Mammary epithelial cell (primary cell): ENCODE measurements at regions of chr7 and their contacts with region 1.

Region 1: DNA sequence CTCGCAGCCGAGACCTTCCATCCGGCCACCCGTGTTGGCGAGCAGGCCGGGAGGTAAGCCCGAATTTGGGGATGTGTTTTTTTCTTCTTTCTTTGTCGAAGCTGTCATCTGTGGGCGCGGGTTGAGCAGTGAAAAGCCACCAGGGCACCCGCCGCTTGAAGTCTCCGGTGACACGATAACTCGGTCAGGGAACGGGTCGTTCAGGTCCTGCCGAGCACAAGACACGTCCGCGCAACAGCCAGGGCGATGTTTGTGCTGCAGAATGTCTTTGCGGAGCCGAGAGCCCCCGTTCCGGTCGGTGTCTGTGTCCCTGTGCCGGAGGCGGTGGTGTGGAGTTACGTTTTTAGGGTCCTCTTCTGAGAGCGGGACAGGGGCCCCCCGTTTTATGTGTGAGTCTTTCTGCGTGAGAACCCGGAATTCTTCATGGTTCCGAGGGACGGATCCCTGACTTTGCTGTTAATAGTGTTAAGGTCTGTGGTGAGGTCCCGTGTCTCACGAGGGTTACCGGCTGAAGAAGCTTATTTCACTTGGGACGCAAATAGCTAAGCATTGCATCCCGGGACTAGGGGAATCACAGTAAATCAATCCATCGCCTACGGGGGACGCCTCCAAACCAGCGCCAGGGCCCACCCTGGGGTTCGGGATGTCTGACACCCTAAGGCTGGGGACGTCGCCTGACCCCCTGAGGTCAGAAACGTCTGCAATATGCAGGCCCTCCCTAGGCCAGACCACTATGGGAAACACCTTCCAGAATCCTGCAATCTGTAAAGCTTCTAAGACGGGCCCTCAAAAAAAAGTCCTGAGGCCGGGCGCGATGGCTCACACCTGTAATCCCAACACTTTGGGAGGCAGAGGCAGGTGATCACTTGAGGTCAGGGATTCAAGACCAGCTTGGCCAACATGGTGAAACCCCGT is 99.5 kb downstream of the ELFN1 start:
- DNase-seq: no peak
- H3K4me3 ChIP-seq: no peak overlapping the region
- H3K27ac ChIP-seq: no peak overlapping the region
- H3K4me1 ChIP-seq: no peaks in the 10 kb centered on the region
- H3K27me3 ChIP-seq: no peaks in the 10 kb centered on the region
- CTCF ChIP-seq: no peak

Region 2: DNA sequence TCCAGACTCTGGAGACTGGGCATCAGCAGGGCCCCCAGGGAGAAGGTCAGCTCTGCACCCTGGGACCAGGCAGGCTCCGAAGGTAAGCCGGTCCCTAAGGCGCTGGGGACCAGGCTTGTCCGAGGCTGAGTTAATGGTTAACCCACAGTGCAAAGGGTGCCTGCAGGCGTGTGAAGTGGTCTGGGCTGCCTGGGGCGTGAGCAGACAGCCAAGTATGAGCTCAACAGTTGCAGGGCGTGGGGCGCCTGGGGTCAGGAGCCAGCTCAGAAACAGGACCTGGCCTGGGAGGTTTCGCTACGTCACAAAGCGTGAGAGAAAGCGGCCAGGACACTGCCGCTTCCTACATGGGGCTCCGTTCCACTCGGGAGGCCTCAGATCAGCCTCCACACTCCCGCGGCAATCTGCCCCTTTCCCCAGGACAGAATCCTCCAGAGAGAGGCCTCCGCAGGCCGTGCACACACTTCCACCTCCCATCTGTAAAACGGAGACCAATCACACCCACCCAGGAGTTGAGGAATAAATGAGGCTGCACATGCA is 1265.9 kb before region 1 on chr7:
- CTCF ChIA-PET with region 1: no interaction called
- dilution Hi-C with region 1: no loop called
- in situ Hi-C with region 1: no loop called
- intact Hi-C with region 1: no loop called
- DNase-seq: no peak
- H3K4me3 ChIP-seq: no peak overlapping the region
- H3K27ac ChIP-seq: no peak overlapping the region
- H3K4me1 ChIP-seq: no peaks in the 10 kb centered on the region
- H3K27me3 ChIP-seq: no peaks in the 10 kb centered on the region
- CTCF ChIP-seq: no peak

Region 3: DNA sequence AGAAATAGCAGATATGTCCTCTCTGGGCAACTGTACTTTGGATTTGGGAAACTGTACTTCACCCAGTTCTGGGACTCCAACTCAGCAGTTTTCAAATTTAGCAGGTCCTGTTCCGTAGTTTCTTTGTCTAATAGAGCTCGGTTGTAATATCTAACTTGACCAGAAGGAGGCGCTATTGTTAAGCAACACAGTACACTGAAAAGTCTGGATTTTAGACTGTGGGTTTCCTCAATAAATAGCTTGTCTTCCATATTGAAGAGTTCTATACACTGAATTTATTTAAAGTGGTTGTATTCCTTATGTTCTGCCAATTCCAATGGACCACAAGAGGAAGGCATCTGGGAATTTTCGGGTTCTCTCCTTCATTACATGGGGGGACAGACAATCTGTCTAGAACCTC is 59.6 kb before region 1 on chr7:
- CTCF ChIA-PET with region 1: no interaction called
- dilution Hi-C with region 1: loop called (anchors 10 kb)
- in situ Hi-C with region 1: no loop called
- intact Hi-C with region 1: no loop called
- DNase-seq: no peak
- H3K4me3 ChIP-seq: no peak overlapping the region
- H3K27ac ChIP-seq: no peak overlapping the region
- H3K4me1 ChIP-seq: no peaks in the 10 kb centered on the region
- H3K27me3 ChIP-seq: no peaks in the 10 kb centered on the region
- CTCF ChIP-seq: peak; percentile 22 to 42

Region 4: DNA sequence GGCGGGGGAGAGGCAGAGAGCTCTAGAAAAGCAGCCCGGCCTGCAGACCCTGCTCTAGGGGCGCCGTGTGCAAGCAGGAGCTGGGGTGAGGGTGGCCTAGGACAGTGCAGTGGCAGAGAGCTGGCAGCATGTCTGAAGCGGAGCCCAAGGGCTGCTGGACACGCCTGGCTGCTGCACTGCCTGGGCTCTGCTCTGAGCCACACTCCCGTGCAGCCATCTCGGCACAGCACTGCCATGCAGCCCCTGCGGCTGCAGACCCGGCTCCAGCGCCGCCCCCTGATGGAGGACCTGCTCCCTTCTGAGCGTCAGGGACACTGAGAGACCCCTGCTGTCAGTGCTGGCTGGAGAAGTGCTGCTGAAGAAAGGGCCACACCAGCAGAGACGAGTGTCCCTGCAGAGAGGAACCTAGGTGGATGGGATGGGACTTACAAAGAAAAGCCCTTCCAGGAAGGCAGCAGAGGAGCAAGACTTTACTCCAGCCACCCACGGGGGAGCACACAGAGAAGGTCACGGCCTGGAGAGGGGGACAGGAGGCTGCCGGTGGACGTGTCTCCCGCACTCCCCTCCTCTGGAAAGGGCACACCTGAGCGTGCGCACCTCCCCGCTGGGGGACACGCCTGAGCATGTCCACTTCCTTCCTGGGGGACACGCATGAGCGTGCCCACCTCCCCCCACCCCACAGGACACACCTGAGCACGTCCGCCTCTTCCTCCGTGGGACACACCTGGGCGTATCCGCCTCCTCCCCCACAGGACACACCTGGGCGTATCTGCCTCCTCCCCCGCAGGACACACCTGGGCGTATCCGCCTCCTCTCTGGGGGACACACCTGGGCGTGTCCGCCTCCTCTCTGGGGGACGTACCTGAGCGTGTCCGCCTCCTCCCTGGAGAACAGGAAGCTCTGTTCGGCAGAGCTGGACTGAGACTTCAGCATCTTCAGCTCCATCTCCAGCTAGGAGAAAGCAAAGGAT is 210.3 kb after region 1 on chr7:
- CTCF ChIA-PET with region 1: no interaction called
- dilution Hi-C with region 1: loop called (anchors 10 kb)
- in situ Hi-C with region 1: no loop called
- intact Hi-C with region 1: no loop called
- DNase-seq: no peak
- H3K4me3 ChIP-seq: no peak overlapping the region
- H3K27ac ChIP-seq: no peak overlapping the region
- H3K4me1 ChIP-seq: peaks cover 7% of the 10 kb centered on the region
- H3K27me3 ChIP-seq: no peaks in the 10 kb centered on the region
- CTCF ChIP-seq: no peak

Region 5: DNA sequence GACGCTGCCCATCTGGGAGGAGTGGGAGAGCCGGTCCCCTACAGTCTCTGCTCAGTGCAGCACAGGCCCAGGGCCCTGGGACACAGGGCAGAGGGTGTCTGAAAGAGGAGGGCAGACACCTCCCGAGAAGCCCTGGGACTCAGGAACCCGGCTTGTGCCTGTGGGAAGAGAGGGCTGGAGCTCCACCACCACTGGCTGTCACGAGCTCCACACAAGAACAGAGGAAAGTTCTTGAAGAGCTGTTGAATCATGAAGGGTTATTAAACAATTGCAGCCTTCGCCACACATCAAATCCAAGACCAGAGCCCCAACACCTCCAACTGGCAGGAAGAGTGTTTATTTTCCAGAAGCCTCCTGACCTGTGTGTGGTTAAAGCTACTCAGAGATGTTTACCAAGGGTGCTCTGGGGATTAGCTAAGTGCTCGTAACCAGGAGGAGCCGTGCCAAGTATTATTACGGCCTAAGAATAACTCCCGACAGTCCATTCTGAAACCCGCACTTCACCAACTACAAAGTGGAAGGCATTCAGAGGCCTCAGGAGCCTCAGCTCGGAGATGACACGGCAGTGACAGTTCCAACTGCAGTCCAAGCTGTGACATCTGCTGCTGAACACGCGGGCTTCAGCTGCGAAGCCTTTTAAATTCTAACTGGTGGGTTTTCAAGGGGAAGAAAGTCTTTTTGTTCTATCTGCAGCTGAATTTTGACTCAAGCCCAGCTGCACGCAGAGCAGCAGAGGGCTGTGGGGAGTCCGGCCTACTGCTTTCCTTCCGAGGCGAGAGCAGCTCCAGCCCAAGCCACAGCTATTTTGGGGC is 388.1 kb after region 1 on chr7:
- CTCF ChIA-PET with region 1: no interaction called
- dilution Hi-C with region 1: loop called (anchors 10 kb)
- in situ Hi-C with region 1: no loop called
- intact Hi-C with region 1: no loop called
- DNase-seq: no peak
- H3K4me3 ChIP-seq: no peak overlapping the region
- H3K27ac ChIP-seq: no peak overlapping the region
- H3K4me1 ChIP-seq: no peaks in the 10 kb centered on the region
- H3K27me3 ChIP-seq: no peaks in the 10 kb centered on the region
- CTCF ChIP-seq: no peak

Region 6: DNA sequence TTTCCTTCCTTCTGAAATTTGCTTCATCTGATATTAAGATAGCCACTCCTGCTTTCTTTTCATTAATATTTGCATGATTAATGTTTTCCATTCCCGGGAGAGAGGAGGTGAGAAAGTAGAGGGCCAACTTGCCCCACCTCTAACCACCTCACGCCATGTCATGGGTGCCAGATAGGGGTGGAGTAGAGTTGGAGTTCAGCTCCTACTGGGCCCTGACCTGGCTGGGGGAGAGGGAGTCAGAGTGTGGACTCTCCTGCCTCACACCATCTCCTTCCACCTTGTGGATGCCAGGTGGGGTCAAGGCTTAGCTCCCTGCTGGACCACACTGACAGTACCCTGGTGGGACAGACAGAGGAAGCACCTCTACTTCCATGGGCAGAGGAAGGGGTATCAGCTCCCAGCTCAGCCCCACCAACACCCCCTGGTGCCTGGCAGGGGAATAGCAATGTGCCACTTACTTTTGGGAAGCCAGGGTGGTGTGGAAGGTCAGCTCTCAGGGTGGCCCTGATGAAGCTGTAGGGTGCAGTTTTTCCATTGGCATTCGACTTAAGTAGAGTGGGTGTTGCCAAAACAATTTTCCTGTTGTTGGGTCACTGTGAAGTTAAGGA is 661.8 kb after region 1 on chr7:
- CTCF ChIA-PET with region 1: no interaction called
- dilution Hi-C with region 1: loop called (anchors 10 kb)
- in situ Hi-C with region 1: no loop called
- intact Hi-C with region 1: no loop called
- DNase-seq: no peak
- H3K4me3 ChIP-seq: no peak overlapping the region
- H3K27ac ChIP-seq: no peak overlapping the region
- H3K4me1 ChIP-seq: no peaks in the 10 kb centered on the region
- H3K27me3 ChIP-seq: no peaks in the 10 kb centered on the region
- CTCF ChIP-seq: peak; percentile 55 to 56